ENCODE measurements at regions of chr11 and their contacts with region 1.

Region 1: DNA sequence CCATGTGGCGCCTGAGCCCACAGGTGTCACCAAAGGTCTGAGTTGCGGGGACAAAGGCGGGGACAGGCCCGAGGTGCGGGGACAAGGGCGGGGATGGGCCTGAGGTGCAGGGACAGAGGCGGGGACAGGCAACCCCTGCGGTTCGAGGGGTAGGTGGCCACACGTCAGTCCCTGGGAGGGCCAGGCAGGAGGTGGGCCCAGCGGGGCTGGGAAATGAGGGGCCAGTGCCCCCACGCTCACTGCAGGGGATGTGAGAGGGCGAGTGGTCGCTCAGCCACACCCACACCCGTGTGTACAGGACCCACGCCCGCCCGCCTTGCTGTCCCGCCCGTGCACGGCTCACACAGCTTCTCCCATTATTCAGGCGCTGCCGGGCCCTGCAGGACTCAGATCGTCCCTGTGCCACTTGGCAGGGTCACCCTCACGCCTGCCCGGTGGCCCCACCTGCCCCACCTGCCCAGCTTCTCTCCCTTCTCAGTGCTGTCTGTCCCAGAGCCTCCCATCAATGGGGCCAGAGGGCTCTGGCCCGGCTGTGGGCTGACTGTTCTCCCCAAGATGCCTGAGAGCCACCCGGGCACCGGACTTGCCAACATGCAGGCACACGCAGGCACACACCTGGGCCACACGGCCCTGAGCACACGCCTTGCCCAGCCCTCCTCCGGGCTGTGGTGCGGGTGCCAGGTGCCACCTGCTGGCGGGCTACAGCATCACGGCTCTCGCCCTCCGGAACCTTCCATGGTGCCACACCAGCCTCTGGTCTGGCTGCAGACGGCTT is 14.2 kb upstream of the MUC6 start:
- DNase-seq: peak; percentile 85
- H3K4me3 ChIP-seq: no peak overlapping the region
- H3K27ac ChIP-seq: no peak overlapping the region
- H3K4me1 ChIP-seq: peaks cover 5% of the 10 kb centered on the region
- H3K27me3 ChIP-seq: peaks cover 11% of the 10 kb centered on the region
- CTCF ChIP-seq: peak; percentile 89

Region 2: GRCh38 chr11:848380-848931 is 202.3 kb before region 1 on chr11:
- intact Hi-C with region 1: loop called (anchors 5 kb)
- DNase-seq: no peak
- H3K4me3 ChIP-seq: no peak overlapping the region
- H3K27ac ChIP-seq: no peak overlapping the region
- H3K4me1 ChIP-seq: peaks cover 6% of the 10 kb centered on the region
- H3K27me3 ChIP-seq: peaks cover 26% of the 10 kb centered on the region
- CTCF ChIP-seq: peak; percentile 97

Region 3: DNA sequence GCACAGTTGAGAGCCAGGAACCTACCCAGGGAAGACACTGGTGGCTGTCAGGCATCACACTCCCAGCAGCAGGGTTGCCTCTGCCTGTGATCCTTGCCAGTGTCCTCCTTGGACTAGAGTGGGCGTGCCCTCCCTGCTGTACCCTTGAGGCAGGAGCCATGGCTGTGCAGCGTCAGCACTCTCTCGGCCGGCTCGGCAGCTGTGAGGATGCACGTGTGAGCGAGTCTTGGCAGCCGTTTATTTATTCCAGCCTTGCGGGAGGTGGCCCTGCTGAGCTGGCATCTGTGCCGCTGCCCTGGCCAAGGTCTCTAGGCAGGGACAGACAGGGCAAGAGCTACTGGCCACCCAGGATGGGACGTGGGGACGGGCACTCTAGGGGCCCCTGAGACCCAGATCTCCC is 174.2 kb before region 1 on chr11:
- intact Hi-C with region 1: no loop called
- DNase-seq: no peak
- H3K4me3 ChIP-seq: no peak overlapping the region
- H3K27ac ChIP-seq: no peak overlapping the region
- H3K4me1 ChIP-seq: no peaks in the 10 kb centered on the region
- H3K27me3 ChIP-seq: no peaks in the 10 kb centered on the region
- CTCF ChIP-seq: no peak

Region 4: GRCh38 chr11:924406-925157 is 126.2 kb before region 1 on chr11:
- intact Hi-C with region 1: loop called (anchors 5 kb)
- DNase-seq: no peak
- H3K4me3 ChIP-seq: no peak overlapping the region
- H3K27ac ChIP-seq: no peak overlapping the region
- H3K4me1 ChIP-seq: peaks cover 19% of the 10 kb centered on the region
- H3K27me3 ChIP-seq: no peaks in the 10 kb centered on the region
- CTCF ChIP-seq: no peak

Measured in colonic mucosa (tissue), 4 donors.